ENCODE measurements at regions of chr11 and their contacts with region 1.

Region 1: DNA sequence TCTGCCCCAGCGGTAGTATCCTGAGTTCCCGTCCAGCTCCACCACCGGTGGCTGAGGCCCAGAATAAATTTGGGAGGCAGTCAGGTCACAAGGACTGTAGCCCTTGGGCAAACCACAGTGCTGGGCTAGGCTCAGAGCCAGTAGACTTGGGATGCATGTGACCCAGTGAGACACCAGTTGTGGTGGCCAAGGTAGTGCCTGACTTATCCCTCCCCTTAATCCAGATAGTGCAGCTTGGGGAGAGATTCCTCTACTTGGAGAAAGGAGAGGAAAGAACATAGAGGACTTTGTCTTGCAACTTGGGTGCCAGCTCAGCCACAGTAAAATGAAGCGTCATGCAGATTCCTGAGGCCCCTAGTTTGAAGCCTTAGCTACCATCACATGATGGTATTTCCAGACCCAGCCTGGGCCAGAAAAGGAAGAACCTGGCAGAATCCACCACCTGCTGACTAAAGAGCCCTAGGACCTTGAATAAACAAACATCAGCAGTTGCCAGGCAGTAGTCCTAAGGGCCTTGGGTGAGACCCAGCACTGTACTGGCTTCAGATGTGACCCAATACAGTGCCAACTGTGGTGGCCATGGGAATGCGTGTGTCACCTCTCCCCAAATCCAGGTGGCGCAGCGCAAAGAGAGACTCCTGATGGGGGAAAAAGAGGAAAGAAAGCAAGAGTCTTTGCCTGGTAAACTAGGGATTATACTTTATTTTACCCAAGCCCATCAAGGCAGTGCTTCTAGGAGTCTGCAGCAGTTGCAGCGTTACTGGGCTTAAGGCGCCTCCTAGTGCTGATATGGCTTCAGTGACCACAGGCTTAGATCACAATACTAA is 17.0 kb upstream of the DDX10 start:
- DNase-seq: peak; percentile 67
- H3K4me3 ChIP-seq: no peak overlapping the region
- H3K27ac ChIP-seq: no peak overlapping the region
- H3K4me1 ChIP-seq: no peaks in the 10 kb centered on the region
- CTCF ChIP-seq: peak; percentile 84

Region 2: GRCh38 chr11:108414958-108415357 is 233.0 kb before region 1 on chr11:
- CTCF ChIA-PET with region 1: no interaction called
- POLR2A ChIA-PET with region 1: no interaction called
- intact Hi-C with region 1: loop called (anchors 5 kb)
- DNase-seq: no peak
- H3K4me3 ChIP-seq: no peak overlapping the region
- H3K27ac ChIP-seq: no peak overlapping the region
- H3K4me1 ChIP-seq: no peaks in the 10 kb centered on the region
- CTCF ChIP-seq: no peak

Region 3: GRCh38 chr11:108664730-108665525 is 17.0 kb after region 1 on chr11 and contains the start of gene DDX10:
- CTCF ChIA-PET with region 1: no interaction called
- POLR2A ChIA-PET with region 1: interaction called, 12 read pairs
- intact Hi-C with region 1: no loop called
- DNase-seq: peak; percentile 98
- H3K4me3 ChIP-seq: peak within 1 kb of the TSS; percentile 95
- H3K27ac ChIP-seq: peak within 1 kb of the TSS; percentile 88
- H3K4me1 ChIP-seq: peaks cover 67% of the 10 kb centered on the region
- CTCF ChIP-seq: peak; percentile 23; the same call in 1 of the 2 replicates
- total RNA-seq, gene DDX10: 38.0 and 46.5 TPM in 2 replicates